GM13977 (cell line): ENCODE measurements at regions of chr4 and their contacts with region 1.

Region 1: DNA sequence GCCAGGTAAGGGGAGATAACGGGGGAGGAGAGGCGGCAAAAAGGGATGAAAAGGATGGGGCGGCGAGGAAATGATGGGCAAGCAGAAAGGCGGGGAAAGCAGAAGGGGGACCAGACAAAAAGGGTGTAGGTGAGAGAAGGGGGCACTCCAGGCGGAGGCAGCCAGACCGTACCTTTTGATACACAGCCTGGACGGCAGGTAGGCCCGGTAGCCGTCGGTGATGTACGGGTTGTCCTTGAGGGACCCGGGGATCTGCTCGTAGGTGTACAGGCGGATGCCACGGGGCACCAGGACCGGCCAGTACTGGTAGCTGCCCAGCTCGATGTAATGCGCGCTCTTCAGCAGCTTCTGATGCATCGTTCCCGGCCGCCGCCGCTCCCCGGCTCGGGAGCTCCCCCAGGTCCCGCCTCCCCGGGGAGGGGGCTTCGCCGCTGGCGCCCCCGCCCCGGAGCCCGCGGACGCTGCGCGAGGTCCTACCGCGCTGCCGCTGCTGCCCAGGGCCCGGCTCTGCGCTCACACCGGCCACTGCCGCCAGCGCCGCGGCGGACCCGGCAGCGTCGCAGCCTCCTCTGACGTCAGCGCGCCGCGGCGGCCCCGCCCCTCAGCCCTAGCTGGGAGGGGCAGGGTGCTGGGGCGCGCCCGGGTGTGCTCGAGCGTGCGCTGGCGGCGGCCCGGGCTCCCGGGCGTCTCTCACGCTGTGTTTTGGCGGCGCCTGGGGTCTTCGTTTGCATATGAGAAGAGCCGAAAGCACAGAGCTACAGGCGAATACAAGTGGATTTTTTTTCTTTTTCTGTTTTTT is at the start of gene PAQR3:
- DNase-seq: peak; percentile 94
- CTCF ChIP-seq: peak; percentile 1

Region 2: DNA sequence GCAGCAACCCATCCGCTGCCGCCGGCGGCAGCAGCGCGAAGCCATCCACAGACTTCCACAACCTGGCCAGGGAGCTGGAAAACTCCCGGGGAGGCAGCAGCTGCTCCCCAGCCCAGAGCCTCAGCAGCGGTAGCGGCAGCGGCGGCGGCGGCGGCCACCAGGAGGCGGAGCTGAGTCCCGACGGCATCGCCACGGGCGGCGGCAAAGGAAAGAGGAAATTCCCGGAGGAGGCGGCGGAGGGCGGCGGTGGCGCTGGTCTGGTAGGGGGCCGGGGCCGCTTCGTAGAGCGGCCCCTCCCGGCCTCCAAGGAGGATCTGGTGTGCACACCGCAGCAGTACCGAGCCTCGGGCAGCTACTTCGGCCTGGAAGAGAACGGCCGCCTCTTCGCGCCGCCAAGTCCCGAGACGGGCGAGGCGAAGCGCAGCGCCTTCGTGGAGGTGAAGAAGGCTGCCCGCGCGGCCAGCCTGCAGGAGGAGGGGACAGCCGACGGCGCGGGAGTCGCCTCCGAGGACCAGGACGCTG is 1263.2 kb after region 1 on chr4:
- in situ Hi-C with region 1: loop called (anchors 25 kb)
- DNase-seq: peak; percentile 86
- CTCF ChIP-seq: peak; percentile 95